Aorta (tissue), 5 donors: ENCODE measurements at regions of chr9 and their contacts with region 1.

Region 1: DNA sequence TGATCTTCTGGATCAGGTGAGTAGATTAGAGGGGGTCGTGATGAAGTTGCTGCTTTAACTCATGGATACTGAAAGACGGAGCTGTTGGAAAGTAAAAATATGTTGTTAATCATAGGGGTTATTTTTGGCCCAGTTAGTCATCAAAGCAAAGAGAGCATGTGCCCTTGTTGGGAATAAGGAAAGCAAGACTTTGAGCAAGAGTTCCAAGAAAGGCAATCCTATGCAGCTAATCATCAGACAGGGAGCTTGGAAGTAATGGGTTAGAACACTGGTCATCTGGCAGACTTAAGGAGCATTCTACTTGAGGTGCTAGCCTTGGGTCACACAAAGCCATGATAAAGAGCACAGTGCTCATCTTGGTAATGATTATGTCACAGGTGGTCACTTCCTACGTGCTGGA is 18.3 kb downstream of the ASPN start:
- DNase-seq: no peak
- ATAC-seq: peak; percentile 87
- H3K4me3 ChIP-seq: no peak overlapping the region
- H3K27ac ChIP-seq: peak overlapping the region; percentile 98 to 100
- H3K4me1 ChIP-seq: peaks cover 4 to 5% of the 10 kb centered on the region in 2 donors
- H3K27me3 ChIP-seq: no peaks in the 10 kb centered on the region

Region 2: DNA sequence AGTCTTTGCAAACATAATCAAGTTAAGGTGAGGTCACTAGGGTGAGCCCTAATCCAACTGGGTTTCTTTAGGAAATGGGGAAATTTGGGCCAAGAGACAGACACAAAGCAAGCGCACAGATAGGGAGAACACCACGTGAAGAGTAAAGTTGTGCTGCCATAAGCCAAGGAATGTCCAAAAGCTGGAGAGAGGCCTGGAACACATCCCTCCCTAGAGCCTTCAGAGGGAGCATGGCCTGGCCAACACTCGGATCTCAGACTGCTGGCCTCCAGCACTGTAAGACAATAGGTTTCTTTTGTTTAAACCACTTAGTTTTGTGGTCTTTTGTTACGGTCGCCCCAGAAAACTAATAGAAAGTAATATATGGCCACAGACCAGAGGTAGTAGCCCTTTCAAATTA is 505.8 kb before region 1 on chr9:
- intact Hi-C with region 1: no loop called
- DNase-seq: no peak
- ATAC-seq: peak; percentile 56
- H3K4me3 ChIP-seq: no peak overlapping the region
- H3K27ac ChIP-seq: no peak overlapping the region
- H3K4me1 ChIP-seq: no peaks in the 10 kb centered on the region
- H3K27me3 ChIP-seq: no peaks in the 10 kb centered on the region

Region 3: DNA sequence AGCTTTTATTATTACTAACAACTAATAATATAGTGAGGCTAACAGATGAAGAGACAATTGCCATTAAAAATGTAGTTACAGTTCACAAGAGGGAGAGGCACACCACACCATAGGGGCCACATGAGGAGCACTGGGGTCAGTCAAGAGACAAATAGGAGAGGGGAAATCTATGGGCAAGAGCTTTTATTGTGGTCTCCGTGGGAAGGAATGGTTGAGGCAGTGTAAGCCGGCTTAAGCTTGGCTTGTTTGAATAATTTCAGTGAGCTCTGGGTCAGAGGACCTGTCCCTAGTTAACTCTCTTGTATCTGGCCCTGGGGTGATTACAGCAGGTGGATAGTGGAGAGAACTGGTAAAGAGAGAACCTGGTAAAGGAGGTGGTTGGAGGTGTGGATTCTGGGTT is 94.9 kb before region 1 on chr9:
- intact Hi-C with region 1: no loop called
- DNase-seq: no peak
- ATAC-seq: no peak
- H3K4me3 ChIP-seq: no peak overlapping the region
- H3K27ac ChIP-seq: no peak overlapping the region
- H3K4me1 ChIP-seq: no peaks in the 10 kb centered on the region
- H3K27me3 ChIP-seq: no peaks in the 10 kb centered on the region

Region 4: GRCh38 chr9:92393686-92394085 is 70.3 kb before region 1 on chr9:
- intact Hi-C with region 1: no loop called
- DNase-seq: no peak
- ATAC-seq: peak; percentile 57
- H3K4me3 ChIP-seq: no peak overlapping the region
- H3K27ac ChIP-seq: peak overlapping the region in 1 of 2 donors; percentile 67
- H3K4me1 ChIP-seq: peaks cover 0 to 2% of the 10 kb centered on the region in 2 donors
- H3K27me3 ChIP-seq: no peaks in the 10 kb centered on the region

Region 5: DNA sequence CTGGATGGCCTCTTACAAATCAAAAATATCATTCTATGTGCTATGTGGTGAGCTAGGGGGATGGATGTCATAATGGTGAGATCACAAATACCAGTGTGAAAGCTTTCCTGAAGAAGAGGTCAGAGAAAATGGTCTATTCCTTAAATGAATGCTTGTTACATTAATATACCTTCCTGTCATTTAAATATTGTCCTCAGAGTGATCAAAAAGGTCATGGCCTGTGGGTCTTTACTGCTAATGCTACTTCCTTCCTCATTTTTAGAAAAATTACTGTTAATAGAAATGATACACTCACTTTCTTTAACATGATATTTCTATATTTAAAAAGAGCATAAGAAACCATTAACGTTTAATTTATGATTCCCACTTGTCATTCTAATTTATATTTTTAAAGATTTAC is 49.4 kb before region 1 on chr9:
- intact Hi-C with region 1: no loop called
- DNase-seq: no peak
- ATAC-seq: no peak
- H3K4me3 ChIP-seq: no peak overlapping the region
- H3K27ac ChIP-seq: no peak overlapping the region
- H3K4me1 ChIP-seq: peaks cover 0 to 2% of the 10 kb centered on the region in 2 donors
- H3K27me3 ChIP-seq: no peaks in the 10 kb centered on the region

Region 6: GRCh38 chr9:92481040-92481633 is 17.2 kb after region 1 on chr9:
- intact Hi-C with region 1: loop called in 1 of 2 experiments (anchors 2 kb)
- DNase-seq: no peak
- ATAC-seq: no peak
- H3K4me3 ChIP-seq: peak overlapping the region; percentile 31 to 54
- H3K27ac ChIP-seq: peak overlapping the region; percentile 28 to 82
- H3K4me1 ChIP-seq: peaks cover 3 to 7% of the 10 kb centered on the region in 2 donors
- H3K27me3 ChIP-seq: no peaks in the 10 kb centered on the region

Region 7: DNA sequence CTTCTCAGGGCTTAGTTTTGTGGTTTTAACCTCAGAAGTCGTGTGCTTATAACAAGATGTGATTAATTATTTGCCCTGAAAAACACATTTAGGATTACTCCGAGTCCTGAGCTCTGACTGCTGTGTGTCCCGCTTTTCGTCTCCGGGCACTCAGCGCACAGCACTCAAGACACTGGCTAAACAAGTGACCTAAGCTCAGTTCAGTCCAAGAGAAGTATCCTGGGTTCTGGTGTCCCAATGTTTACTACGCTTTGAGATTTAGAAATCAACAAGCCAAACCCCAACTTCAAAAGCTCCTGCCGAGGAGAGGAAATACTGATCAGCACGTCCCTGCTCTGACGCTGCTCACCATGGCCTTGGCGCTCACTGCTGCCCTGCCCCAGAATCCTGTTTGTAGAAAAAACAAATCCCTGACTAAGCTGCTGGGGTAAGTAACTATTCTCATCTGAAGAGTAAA is 152.7 kb after region 1 on chr9:
- intact Hi-C with region 1: loop called in 1 of 2 experiments (anchors 5 kb)
- DNase-seq: peak in 1 of 2 donors; percentile 56
- ATAC-seq: peak; percentile 54
- H3K4me3 ChIP-seq: no peak overlapping the region
- H3K27ac ChIP-seq: peak overlapping the region; percentile 6 to 42
- H3K4me1 ChIP-seq: no peaks in the 10 kb centered on the region
- H3K27me3 ChIP-seq: no peaks in the 10 kb centered on the region